ENCODE measurements at regions of chr2 and their contacts with region 1.

Region 1: GRCh38 chr2:169623235-169623634 is 39.1 kb downstream of the PPIG start:
- DNase-seq: no peak
- H3K4me3 ChIP-seq: no peak overlapping the region
- H3K27ac ChIP-seq: no peak overlapping the region
- H3K4me1 ChIP-seq: no peaks in the 10 kb centered on the region
- H3K27me3 ChIP-seq: no peaks in the 10 kb centered on the region
- CTCF ChIP-seq: no peak
- EP300 ChIP-seq: no peak
- RAD21 ChIP-seq: no peak

Region 2: DNA sequence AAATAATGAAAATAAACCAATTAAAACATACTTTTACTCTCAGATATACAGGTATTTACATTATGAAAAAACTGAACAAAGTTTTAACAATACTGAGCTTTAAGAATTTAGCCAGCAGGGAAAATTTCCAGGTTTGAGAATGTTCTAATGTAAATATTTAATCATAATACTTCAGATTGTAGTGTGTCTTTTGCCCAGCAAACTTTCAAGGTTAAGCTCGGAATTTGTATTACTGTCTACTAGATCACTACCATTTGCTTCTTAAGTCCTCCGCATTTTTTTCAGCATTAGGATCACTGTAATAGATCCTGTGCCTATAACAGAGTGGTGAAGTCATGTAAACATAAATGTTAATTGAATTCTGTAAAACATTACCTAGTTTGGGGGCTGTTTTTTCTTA is 18.2 kb after region 1 on chr2:
- CTCF ChIA-PET with region 1: interaction called, 21 read pairs
- POLR2A ChIA-PET with region 1: no interaction called
- DNase-seq: no peak
- H3K4me3 ChIP-seq: no peak overlapping the region
- H3K27ac ChIP-seq: no peak overlapping the region
- H3K4me1 ChIP-seq: no peaks in the 10 kb centered on the region; a peak in 1 of 4 replicates
- H3K27me3 ChIP-seq: no peaks in the 10 kb centered on the region
- CTCF ChIP-seq: no peak
- EP300 ChIP-seq: no peak
- RAD21 ChIP-seq: no peak

Measured in SK-N-SH (cell line).